PC-9 (cell line): ENCODE measurements at regions of chr13 and their contacts with region 1.

Region 1: DNA sequence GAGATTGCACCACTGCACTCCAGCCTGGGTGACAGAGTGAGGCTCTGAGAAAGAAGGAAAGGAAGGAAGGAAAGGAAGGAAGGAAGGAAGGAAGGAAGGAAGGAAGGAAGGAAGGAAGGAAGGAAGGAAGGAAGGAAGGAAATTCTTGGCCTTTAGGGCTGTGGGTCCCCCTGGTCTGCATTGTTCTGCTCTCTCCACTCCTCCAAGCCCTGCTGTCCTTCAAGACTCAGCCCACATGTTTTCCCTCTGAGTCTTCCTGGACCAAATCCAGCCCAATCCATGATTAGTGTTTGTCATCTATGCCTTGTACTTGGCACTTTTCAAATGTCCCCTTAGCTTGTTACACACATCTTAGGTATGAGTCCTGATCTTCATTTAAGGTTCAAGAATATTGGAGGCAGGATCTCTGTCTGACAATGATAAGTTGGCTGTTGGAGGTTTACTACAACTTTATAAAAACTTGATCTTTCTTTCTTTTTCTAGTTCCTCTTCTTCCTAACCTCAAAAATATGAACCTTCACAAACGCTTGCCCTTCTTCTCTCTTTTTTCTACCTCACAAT is 48.8 kb upstream of the INTS6 start:
- DNase-seq: no peak
- H3K4me3 ChIP-seq: no peak overlapping the region
- H3K27ac ChIP-seq: no peak overlapping the region
- H3K4me1 ChIP-seq: no peaks in the 10 kb centered on the region
- H3K27me3 ChIP-seq: no peaks in the 10 kb centered on the region
- CTCF ChIP-seq: no peak

Region 2: GRCh38 chr13:51577680-51578079 is 76.0 kb after region 1 on chr13:
- CTCF ChIA-PET with region 1: no interaction called
- POLR2A ChIA-PET with region 1: no interaction called
- intact Hi-C with region 1: loop called (anchors 2 kb)
- DNase-seq: no peak
- H3K4me3 ChIP-seq: no peak overlapping the region
- H3K27ac ChIP-seq: no peak overlapping the region
- H3K4me1 ChIP-seq: no peaks in the 10 kb centered on the region
- H3K27me3 ChIP-seq: no peaks in the 10 kb centered on the region
- CTCF ChIP-seq: no peak